HCT116 (cell line): ENCODE measurements at regions of chr19 and their contacts with region 1.

Region 1: GRCh38 chr19:49570138-49570856 is 10.1 kb downstream of the NOSIP start:
- DNase-seq: peak; percentile 83
- ATAC-seq: peak; percentile 77
- H3K4me3 ChIP-seq: no peak overlapping the region
- H3K27ac ChIP-seq: peak overlapping the region; percentile 47
- H3K4me1 ChIP-seq: peaks cover 44 to 61% of the 10 kb centered on the region in 2 experiments
- H3K27me3 ChIP-seq: no peaks in the 10 kb centered on the region
- CTCF ChIP-seq: peak; percentile 97 to 99 (median 99)
- POLR2A ChIP-seq: no peak
- RAD21 ChIP-seq: peak; percentile 87

Region 2: DNA sequence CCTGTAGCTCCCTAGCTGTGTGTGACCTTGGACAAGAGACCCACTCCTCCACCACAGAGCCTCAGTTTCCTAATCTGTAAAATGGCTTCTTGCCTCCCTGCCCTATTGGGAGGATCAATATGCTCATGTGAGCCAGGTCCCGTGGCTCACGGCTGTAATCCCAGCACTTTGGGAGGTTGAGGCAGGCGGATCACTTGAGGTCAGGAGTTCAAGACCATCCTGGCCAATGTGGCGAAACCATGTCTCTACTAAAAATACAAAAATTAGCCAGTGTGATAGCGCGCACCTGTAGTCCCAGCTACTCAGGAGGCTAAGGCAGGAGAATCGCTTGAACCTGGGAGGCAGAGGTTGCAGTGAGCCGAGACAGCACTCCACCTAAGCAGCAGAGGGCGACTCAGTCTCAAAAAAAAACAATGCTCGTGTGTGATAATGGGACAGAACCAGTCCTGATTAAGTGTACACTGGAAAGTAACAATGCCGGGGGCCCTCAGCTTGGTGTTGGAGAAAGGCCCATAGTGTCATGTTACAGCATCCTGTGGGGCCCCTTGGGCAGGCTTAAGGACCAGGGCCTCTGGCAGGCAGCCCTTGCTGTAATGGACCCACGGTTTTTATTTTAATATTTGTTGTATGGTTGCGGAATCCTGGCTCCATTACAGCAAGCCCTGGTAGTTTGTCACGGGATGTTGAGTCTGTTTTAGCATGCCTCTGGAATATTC is 67.3 kb before region 1 on chr19:
- CTCF ChIA-PET with region 1: interaction called, 17 read pairs
- POLR2A ChIA-PET with region 1: no interaction called
- RAD21 ChIA-PET with region 1: no interaction called
- intact Hi-C with region 1: loop called (anchors 1 kb)
- DNase-seq: peak; percentile 54
- ATAC-seq: peak; percentile 60
- H3K4me3 ChIP-seq: no peak overlapping the region
- H3K27ac ChIP-seq: no peak overlapping the region; the same call in 1 of the 2 replicates
- H3K4me1 ChIP-seq: peaks cover 6 to 34% of the 10 kb centered on the region in 2 experiments
- H3K27me3 ChIP-seq: no peaks in the 10 kb centered on the region
- CTCF ChIP-seq: peak; percentile 61 to 80 (median 66)
- POLR2A ChIP-seq: no peak
- RAD21 ChIP-seq: peak; percentile 83

Region 3: DNA sequence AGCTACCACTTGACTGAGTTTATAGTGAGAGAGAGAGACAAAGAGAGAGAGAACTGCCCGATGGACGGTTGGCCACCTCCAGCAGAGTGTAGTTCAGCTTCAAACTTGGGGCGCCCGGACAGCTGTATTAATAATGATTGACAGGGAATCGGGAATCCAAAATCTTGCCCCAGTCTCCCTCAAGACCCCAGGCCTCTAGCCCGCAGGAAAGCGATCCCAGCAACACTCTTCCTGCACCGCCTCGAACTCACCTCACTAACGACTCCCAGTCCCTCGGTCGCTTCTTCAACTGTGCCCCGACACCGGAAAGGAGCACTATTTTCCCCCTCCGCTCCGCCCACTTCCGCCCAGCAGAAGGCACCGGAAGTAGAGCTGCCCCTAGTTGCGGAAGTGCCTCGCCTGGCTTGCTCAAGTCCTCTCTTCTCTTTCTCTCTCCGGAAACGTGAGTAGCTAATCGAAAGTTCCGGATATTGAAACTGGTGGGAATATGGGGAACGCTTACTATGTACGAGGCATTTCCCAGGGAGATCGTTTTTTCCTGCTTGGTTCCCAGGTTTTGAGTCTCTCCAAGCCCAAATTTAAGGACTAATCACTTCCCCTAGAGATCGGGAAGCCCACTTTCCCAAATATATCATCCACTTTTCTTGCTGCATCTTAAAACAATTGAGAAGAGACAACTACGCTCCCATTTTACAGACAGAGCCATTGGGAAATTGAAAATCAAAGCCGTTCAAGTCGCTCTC is 10.1 kb after region 1 on chr19 and contains the start of gene NOSIP:
- CTCF ChIA-PET with region 1: interaction called, 22 read pairs
- POLR2A ChIA-PET with region 1: interaction called, 7 read pairs
- RAD21 ChIA-PET with region 1: no interaction called
- intact Hi-C with region 1: no loop called
- DNase-seq: peak; percentile 95
- ATAC-seq: peak; percentile 85
- H3K4me3 ChIP-seq: peak within 1 kb of the TSS; percentile 86 to 99
- H3K27ac ChIP-seq: peak within 1 kb of the TSS; percentile 56
- H3K4me1 ChIP-seq: peaks cover 18 to 50% of the 10 kb centered on the region in 2 experiments
- H3K27me3 ChIP-seq: no peaks in the 10 kb centered on the region
- CTCF ChIP-seq: no peak
- POLR2A ChIP-seq: peak; percentile 97
- RAD21 ChIP-seq: no peak
- total RNA-seq, gene NOSIP: 133 TPM